CD8-positive, alpha-beta T cell (primary cell): ENCODE measurements at regions of chr2 and their contacts with region 1.

Region 1: DNA sequence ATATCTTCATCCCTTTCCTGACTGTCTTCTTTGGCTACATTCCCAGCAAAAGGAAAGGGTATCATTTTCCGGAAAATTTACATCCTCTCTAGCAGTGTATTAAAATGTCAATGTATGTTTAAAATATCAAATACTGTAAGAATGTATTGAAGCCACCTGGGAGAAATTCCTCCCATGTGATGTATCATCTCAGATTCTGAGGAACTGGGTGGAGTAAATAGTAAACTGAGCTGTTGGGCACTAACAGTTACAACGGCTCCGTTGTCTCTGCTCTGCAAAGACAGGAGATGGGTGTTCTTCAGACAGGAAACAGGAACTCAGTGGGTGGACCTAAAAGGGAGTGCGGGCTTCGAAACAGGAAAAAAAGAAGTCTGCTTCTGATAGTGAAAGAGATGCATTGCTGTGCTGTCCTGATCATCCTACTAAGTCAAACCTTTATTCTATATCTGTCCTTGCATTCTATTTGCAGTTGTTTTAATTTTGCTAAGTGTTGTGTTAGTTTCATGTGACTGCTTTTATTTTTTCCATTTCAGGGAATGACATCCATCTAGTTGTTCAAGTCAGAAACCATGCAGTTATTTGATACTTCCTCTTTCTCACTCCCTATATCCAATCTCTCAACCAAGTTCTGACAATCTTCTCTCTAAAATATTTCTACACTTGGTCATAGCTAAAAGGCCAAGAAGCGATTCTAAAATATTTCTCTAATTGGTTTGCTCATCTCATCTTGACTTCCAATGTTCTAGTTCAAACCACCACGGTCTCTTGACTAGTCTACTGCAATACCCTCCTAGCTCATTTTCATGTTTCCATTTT is 19.4 kb downstream of the DOK1 start:
- DNase-seq: peak in 4 of 9 experiments; percentile 27 to 63 (median 45)
- ATAC-seq: peak; percentile 77
- H3K4me3 ChIP-seq: peak overlapping the region; percentile 0 to 3
- H3K4me3 Mint-ChIP-seq: peak overlapping the region; percentile 66
- H3K27ac ChIP-seq: peak overlapping the region in 1 of 2 experiments; percentile 47
- H3K27ac Mint-ChIP-seq: peak overlapping the region; percentile 75
- H3K4me1 ChIP-seq: peaks cover 14% of the 10 kb centered on the region
- H3K4me1 Mint-ChIP-seq: peaks cover 15% of the 10 kb centered on the region
- H3K27me3 ChIP-seq: no peaks in the 10 kb centered on the region
- H3K27me3 Mint-ChIP-seq: peaks cover 6% of the 10 kb centered on the region
- CTCF ChIP-seq: no peak

Region 2: DNA sequence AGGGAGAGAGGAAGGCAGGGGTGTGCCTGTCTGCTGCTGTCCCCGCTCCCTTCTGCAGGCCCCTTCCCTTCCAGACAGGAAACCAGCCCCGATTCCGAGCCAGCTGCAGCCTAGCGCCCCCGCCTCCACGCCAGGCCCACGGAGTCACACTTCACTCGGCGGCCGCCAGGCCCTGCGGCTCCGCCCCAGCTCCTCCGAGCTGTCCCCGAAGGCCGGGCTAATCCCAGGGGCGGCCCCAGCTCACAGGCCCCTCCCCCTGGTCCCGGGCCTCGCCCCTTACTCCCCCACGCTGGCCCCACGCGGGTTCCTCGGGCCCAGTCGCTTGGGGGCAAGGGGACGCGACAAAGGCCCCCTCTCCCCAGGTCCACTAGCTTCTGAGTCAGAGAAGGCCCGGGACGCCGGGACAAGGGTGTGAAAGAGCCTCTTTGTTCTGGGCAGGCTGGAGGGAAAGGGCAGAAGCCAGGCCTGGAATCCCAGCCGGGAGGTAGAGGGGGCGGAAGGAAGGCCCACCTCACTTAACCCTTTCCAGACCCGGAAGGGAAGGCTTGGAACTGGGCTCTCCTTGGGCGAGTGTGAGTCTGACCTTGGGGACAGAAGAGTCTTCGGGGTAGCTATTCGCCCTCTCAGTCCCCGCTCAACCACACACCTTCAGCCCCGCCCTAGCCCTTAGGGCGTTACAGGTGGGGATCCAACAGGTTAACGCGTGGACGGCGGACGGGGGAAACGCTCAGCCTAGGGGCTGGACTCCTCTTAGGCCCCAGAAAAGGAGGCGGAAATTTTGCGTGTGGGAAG is 133.4 kb before region 1 on chr2:
- CTCF ChIA-PET with region 1: no interaction called
- POLR2A ChIA-PET with region 1: no interaction called
- intact Hi-C with region 1: no loop called
- DNase-seq: peak in 6 of 9 experiments; percentile 28 to 70 (median 42)
- ATAC-seq: peak; percentile 73
- H3K4me3 ChIP-seq: peak overlapping the region in 1 of 2 experiments; percentile 12
- H3K4me3 Mint-ChIP-seq: peak overlapping the region; percentile 61
- H3K27ac ChIP-seq: no peak overlapping the region
- H3K27ac Mint-ChIP-seq: no peak overlapping the region
- H3K4me1 ChIP-seq: peaks cover 23% of the 10 kb centered on the region
- H3K4me1 Mint-ChIP-seq: peaks cover 10% of the 10 kb centered on the region
- H3K27me3 ChIP-seq: peaks cover 16 to 21% of the 10 kb centered on the region in 2 experiments
- H3K27me3 Mint-ChIP-seq: peaks cover 29% of the 10 kb centered on the region
- CTCF ChIP-seq: no peak

Region 3: DNA sequence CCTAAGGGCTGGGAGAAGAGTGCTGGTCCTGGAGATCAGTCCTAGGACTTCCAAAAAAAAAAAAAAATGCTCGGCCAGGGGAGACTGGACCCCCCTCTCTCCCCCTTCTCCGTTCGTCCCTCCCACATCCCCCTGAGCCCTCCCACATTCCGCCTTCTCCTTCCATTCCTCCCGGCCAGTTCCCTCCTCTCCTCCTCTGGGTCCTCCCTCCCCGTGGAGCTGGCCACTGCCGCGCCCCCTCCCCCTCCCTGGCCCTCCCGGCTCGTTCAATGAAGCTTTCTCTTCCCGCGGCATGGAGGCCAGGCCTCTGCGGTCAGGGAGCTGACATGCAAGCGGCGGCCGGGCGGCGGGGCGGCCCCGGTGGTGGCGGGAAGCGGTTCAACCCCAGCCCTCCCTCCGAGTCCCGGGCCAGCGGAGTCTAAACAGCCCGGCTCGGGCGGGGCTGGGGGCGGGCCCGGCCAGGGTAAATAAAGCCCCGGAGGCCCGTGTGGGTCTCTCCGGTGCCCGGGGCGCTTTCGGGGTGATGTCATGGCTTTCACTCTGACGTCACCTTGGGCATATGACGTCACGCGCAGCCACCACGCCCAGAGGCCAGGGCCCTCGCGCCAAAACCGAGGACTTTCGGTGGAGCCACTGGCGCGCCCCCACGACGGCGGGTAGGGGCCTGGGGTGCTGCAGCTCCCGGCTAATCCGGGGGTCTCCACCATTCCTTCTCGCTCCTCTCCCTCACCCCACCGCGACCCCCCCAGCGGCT is 19.9 kb before region 1 on chr2 and contains the start of gene LOXL3:
- CTCF ChIA-PET with region 1: interaction called, 3 read pairs
- POLR2A ChIA-PET with region 1: no interaction called
- intact Hi-C with region 1: loop called in 1 of 2 experiments (anchors 2 kb)
- DNase-seq: peak in 6 of 9 experiments; percentile 58 to 87 (median 70)
- ATAC-seq: peak; percentile 63
- H3K4me3 ChIP-seq: peak within 1 kb of the TSS; percentile 97 to 100
- H3K4me3 Mint-ChIP-seq: peak within 1 kb of the TSS; percentile 91
- H3K27ac ChIP-seq: peak within 1 kb of the TSS; percentile 66 to 77
- H3K27ac Mint-ChIP-seq: peak within 1 kb of the TSS; percentile 84
- H3K4me1 ChIP-seq: peaks cover 17% of the 10 kb centered on the region
- H3K4me1 Mint-ChIP-seq: peaks cover 10% of the 10 kb centered on the region
- H3K27me3 ChIP-seq: peaks cover 2 to 11% of the 10 kb centered on the region in 2 experiments
- H3K27me3 Mint-ChIP-seq: peaks cover 19% of the 10 kb centered on the region
- CTCF ChIP-seq: no peak
- total RNA-seq, gene LOXL3: not detected